CD4-positive, alpha-beta T cell (primary cell): ENCODE measurements at regions of chr3 and their contacts with region 1.

Region 1: GRCh38 chr3:189316242-189317019 is 144.7 kb downstream of the TPRG1 start:
- DNase-seq: no peak
- ATAC-seq: no peak
- H3K4me3 ChIP-seq: no peak overlapping the region
- H3K4me3 Mint-ChIP-seq: no peak overlapping the region
- H3K27ac ChIP-seq: no peak overlapping the region
- H3K27ac Mint-ChIP-seq: no peak overlapping the region
- H3K4me1 ChIP-seq: peaks cover 6% of the 10 kb centered on the region
- H3K4me1 Mint-ChIP-seq: peaks cover 37% of the 10 kb centered on the region
- H3K27me3 ChIP-seq: no peaks in the 10 kb centered on the region
- H3K27me3 Mint-ChIP-seq: no peaks in the 10 kb centered on the region
- CTCF ChIP-seq: no peak

Region 2: DNA sequence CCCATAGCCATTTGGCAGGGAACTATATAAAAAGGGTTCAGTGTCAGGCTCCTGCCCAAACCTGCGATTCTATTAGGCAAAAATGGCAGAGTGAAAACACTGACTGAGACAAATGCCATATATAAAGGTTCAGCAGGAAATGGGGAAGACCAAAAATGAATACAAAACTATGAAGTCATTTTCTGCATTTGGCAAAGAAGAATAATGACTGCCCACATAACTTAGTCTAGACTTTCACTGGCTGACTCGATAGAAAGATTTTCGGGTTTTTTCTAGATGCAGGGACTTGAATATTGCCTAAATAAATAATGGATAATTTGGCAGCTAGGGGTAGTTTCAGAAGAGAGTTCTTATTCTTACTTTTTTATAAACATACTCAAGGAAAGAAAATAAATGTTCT is 33.3 kb after region 1 on chr3:
- CTCF ChIA-PET with region 1: no interaction called
- POLR2A ChIA-PET with region 1: interaction called, 6 read pairs
- intact Hi-C with region 1: loop called in 1 of 2 experiments (anchors 5 kb)
- DNase-seq: no peak
- ATAC-seq: no peak
- H3K4me3 ChIP-seq: no peak overlapping the region
- H3K4me3 Mint-ChIP-seq: no peak overlapping the region
- H3K27ac ChIP-seq: no peak overlapping the region
- H3K27ac Mint-ChIP-seq: no peak overlapping the region
- H3K4me1 ChIP-seq: peaks cover 6% of the 10 kb centered on the region
- H3K4me1 Mint-ChIP-seq: peaks cover 9% of the 10 kb centered on the region
- H3K27me3 ChIP-seq: no peaks in the 10 kb centered on the region
- H3K27me3 Mint-ChIP-seq: no peaks in the 10 kb centered on the region
- CTCF ChIP-seq: no peak